ENCODE measurements at regions of chr14 and their contacts with region 1.

Region 1: GRCh38 chr14:74217672-74218448 is 21.4 kb upstream of the VSX2 start:
- DNase-seq: peak; percentile 69
- H3K4me3 ChIP-seq: peak overlapping the region; percentile 11
- H3K27ac ChIP-seq: no peak overlapping the region
- H3K4me1 ChIP-seq: peaks cover 4% of the 10 kb centered on the region
- H3K27me3 ChIP-seq: no peaks in the 10 kb centered on the region
- CTCF ChIP-seq: peak; percentile 85

Region 2: GRCh38 chr14:74077401-74077800 is 140.5 kb before region 1 on chr14:
- intact Hi-C with region 1: no loop called
- DNase-seq: no peak
- H3K4me3 ChIP-seq: no peak overlapping the region
- H3K27ac ChIP-seq: no peak overlapping the region
- H3K4me1 ChIP-seq: no peaks in the 10 kb centered on the region
- H3K27me3 ChIP-seq: no peaks in the 10 kb centered on the region
- CTCF ChIP-seq: no peak

Region 3: DNA sequence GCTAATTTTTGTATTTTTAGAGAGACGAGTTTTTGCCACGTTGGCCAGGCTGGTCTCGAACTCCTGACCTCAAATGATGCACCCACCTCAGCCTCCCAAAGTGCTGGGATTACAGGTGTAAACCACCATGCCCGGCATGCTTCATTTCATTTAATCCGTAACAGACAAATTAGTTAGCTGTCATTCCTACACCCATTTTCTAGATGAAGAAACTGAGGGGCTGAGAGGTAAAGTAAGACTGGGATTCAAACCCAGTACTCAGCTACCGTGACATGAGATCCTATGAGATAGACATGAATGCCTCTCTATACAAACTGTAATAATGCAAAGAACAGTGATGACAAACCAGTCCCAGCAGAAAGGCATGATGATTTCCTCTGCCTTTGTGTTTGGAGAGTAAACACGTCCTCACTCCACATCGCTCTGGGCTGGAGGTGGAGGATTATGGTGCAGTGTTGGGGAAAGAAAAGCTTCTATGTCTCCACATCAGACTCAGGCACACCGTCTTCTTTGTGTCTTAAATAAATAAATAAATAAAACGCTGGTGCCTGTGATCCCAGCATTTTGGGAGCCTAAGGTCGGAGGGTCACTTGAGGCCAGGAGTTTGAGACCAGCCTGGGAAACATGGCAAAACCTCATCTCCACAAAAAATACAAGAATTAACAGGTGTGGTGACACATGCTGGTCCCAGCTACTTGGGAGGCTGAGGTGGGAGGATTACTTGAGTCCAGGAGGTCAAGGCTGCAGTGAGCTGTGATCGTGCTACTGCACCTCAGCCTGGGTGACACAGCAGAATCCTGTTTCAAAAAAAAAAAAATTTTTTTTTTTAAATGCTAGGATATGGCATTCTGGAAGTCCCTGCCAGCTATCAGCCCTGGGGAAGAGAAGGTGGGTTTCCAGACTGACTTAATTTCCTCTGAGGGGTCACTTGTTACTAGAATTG is 31.8 kb after region 1 on chr14:
- intact Hi-C with region 1: loop called (anchors 5 kb)
- DNase-seq: no peak
- H3K4me3 ChIP-seq: no peak overlapping the region
- H3K27ac ChIP-seq: no peak overlapping the region
- H3K4me1 ChIP-seq: no peaks in the 10 kb centered on the region
- H3K27me3 ChIP-seq: no peaks in the 10 kb centered on the region
- CTCF ChIP-seq: no peak

Measured in colonic mucosa (tissue), 4 donors.